CD4-positive, alpha-beta memory T cell (primary cell): ENCODE measurements at regions of chr6 and their contacts with region 1.

Region 1: GRCh38 chr6:31197559-31198305 is 27.2 kb upstream of the POU5F1 start:
- DNase-seq: peak; percentile 93 to 99 (median 96)
- H3K4me3 ChIP-seq: peak overlapping the region; percentile 62 to 99
- H3K4me3 Mint-ChIP-seq: peak overlapping the region; percentile 87 to 96 (median 94)
- H3K27ac ChIP-seq: peak overlapping the region; percentile 96
- H3K27ac Mint-ChIP-seq: peak overlapping the region; percentile 93 to 100 (median 99)
- H3K4me1 ChIP-seq: peaks cover 47% of the 10 kb centered on the region
- H3K4me1 Mint-ChIP-seq: peaks cover 41 to 72% (median 53%) of the 10 kb centered on the region in 4 donors
- H3K27me3 ChIP-seq: no peaks in the 10 kb centered on the region
- H3K27me3 Mint-ChIP-seq: peaks cover 0 to 3% of the 10 kb centered on the region in 2 donors

Region 2: GRCh38 chr6:30942338-30943060 is 255.2 kb before region 1 on chr6:
- CTCF ChIA-PET with region 1: no interaction called
- POLR2A ChIA-PET with region 1: no interaction called
- intact Hi-C with region 1: no loop called
- DNase-seq: no peak
- H3K4me3 ChIP-seq: no peak overlapping the region
- H3K4me3 Mint-ChIP-seq: no peak overlapping the region
- H3K27ac ChIP-seq: no peak overlapping the region
- H3K27ac Mint-ChIP-seq: no peak overlapping the region
- H3K4me1 ChIP-seq: no peaks in the 10 kb centered on the region
- H3K4me1 Mint-ChIP-seq: peaks cover 0 to 3% (median 0%) of the 10 kb centered on the region in 4 donors
- H3K27me3 ChIP-seq: peaks cover 20% of the 10 kb centered on the region
- H3K27me3 Mint-ChIP-seq: peaks cover 31 to 59% of the 10 kb centered on the region in 2 donors

Region 3: DNA sequence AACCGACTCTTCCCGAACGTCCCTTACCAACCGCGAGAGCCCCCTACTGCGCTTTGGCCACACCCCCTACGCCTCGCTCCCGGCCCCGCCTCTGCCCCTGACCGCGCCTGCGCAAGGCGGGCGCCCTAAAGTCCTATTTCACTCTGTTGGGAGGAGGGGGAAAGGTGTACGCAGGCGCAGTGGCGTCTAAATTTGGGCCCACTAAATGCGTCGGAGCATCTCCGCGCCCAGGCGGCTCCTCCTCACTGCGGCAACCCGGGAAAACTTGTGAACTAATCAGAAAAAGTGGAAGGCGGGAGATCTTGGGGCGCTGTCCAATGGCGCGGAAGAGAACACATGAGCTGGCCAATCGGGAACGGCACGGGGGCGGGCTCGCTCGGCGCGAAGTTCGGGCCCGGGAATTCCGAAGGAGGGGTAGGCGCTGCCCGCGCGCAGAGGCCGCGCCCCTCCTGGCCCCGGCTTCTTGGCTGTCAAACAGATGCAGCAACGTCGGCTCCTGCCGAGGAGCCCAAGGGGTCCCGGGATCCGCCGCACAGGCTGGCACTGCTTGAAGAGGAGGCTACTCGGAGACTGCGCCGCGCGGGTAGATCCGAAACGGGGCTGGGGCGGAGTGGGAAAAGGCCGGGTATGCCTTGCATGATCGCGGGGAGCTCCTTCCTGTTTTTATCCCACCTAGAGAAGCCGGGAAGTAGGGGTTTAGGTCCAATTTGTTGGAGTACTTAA is 39.4 kb before region 1 on chr6 and contains the start of gene TCF19:
- CTCF ChIA-PET with region 1: interaction called, 4 read pairs
- POLR2A ChIA-PET with region 1: interaction called, 34 read pairs
- intact Hi-C with region 1: loop called (anchors 1 kb)
- DNase-seq: peak; percentile 98 to 99 (median 98)
- H3K4me3 ChIP-seq: peak within 1 kb of the TSS; percentile 59 to 70
- H3K4me3 Mint-ChIP-seq: peak within 1 kb of the TSS; percentile 87 to 95 (median 90)
- H3K27ac ChIP-seq: peak within 1 kb of the TSS; percentile 69
- H3K27ac Mint-ChIP-seq: peak within 1 kb of the TSS; percentile 75 to 95 (median 93)
- H3K4me1 ChIP-seq: peaks cover 22% of the 10 kb centered on the region
- H3K4me1 Mint-ChIP-seq: peaks cover 14 to 34% (median 24%) of the 10 kb centered on the region in 4 donors
- H3K27me3 ChIP-seq: no peaks in the 10 kb centered on the region
- H3K27me3 Mint-ChIP-seq: no peaks in the 10 kb centered on the region
- total RNA-seq, gene TCF19: 9.0 to 9.9 TPM

Region 4: DNA sequence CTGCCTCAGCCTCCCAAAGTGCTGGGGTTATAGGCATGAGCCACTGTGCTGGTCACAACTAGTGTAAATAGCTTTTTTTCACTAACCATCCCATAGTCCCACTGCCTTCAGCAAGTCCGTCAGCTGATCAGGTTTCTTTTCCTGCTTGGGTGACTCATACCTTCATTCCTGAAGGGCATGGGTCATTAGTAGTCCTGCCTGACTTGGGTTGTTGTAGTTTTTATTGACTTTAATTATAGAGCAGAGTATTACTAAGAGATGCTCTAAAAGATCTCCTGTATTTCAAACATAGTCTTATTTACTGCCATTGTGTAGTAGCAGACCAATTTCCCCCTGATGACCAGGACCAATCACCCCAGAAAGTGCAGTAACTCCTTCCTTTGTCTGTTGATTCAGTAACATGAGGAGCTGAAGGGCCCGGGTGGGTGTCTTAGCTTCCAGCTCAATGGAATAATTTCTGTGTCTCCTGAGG is 48.4 kb after region 1 on chr6:
- CTCF ChIA-PET with region 1: interaction called, 4 read pairs
- POLR2A ChIA-PET with region 1: interaction called, 15 read pairs
- intact Hi-C with region 1: no loop called
- DNase-seq: no peak
- H3K4me3 ChIP-seq: no peak overlapping the region
- H3K4me3 Mint-ChIP-seq: no peak overlapping the region
- H3K27ac ChIP-seq: no peak overlapping the region
- H3K27ac Mint-ChIP-seq: no peak overlapping the region
- H3K4me1 ChIP-seq: peaks cover 7% of the 10 kb centered on the region
- H3K4me1 Mint-ChIP-seq: peaks cover 6 to 14% (median 11%) of the 10 kb centered on the region in 4 donors
- H3K27me3 ChIP-seq: no peaks in the 10 kb centered on the region
- H3K27me3 Mint-ChIP-seq: peaks cover 9 to 12% of the 10 kb centered on the region in 2 donors

Region 5: GRCh38 chr6:31271641-31272357 is 74.1 kb after region 1 on chr6 and contains the start of gene HLA-C:
- CTCF ChIA-PET with region 1: interaction called, 9 read pairs
- POLR2A ChIA-PET with region 1: interaction called, 90 read pairs
- intact Hi-C with region 1: loop called (anchors 1 kb)
- DNase-seq: peak; percentile 92 to 98 (median 93)
- H3K4me3 ChIP-seq: peak within 1 kb of the TSS; percentile 88 to 94
- H3K4me3 Mint-ChIP-seq: peak within 1 kb of the TSS; percentile 95 to 100 (median 98)
- H3K27ac ChIP-seq: peak within 1 kb of the TSS; percentile 100
- H3K27ac Mint-ChIP-seq: peak within 1 kb of the TSS; percentile 99 to 100 (median 100)
- H3K4me1 ChIP-seq: peaks cover 51% of the 10 kb centered on the region
- H3K4me1 Mint-ChIP-seq: peaks cover 45 to 77% (median 54%) of the 10 kb centered on the region in 4 donors
- H3K27me3 ChIP-seq: no peaks in the 10 kb centered on the region
- H3K27me3 Mint-ChIP-seq: peaks cover 0 to 2% of the 10 kb centered on the region in 2 donors
- total RNA-seq, gene HLA-C: 1,481 to 1,487 TPM

Region 6: DNA sequence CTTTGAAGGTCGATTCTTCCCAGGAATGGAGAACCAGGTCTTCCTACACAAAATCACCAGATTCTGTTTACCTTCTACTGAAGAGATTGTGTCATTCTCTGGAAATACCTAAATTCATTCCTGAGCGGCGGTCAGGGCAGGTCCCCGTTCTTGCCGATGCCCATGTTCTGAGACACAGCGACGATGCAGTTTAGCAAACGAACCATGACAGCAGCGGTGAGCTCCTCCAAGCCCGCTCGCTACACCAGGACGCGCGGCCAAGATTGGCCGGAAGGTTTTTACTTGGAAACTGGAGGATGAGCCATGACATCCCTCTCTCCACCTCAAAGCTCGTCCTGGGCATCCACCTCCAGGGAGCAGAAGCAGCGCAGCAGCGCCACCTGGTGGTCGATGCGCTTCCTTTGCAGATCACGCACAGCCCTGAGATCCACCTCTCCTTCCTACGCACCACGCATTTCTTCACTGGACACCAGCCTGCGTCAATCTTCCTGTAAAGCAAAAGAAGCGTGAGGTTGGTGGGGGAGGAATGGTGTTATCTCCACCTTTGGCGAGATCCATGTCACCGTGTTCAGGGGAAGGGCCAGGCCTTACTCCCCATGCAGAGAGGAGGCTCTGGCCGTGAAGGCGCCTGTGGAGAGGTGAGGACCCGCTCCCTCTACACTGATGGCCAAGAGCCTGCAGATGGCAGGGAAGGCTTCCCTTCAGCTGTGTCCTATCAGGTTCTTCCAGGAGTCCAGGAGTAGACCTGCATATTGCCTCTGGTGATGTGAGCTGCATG is 169.2 kb after region 1 on chr6:
- CTCF ChIA-PET with region 1: interaction called, 184 read pairs
- POLR2A ChIA-PET with region 1: interaction called, 517 read pairs
- intact Hi-C with region 1: loop called (anchors 1 kb)
- DNase-seq: peak; percentile 81 to 88 (median 85)
- H3K4me3 ChIP-seq: peak overlapping the region; percentile 30 to 67
- H3K4me3 Mint-ChIP-seq: peak overlapping the region; percentile 77 to 87 (median 86)
- H3K27ac ChIP-seq: peak overlapping the region; percentile 18
- H3K27ac Mint-ChIP-seq: peak overlapping the region; percentile 9 to 88 (median 77)
- H3K4me1 ChIP-seq: peaks cover 10% of the 10 kb centered on the region
- H3K4me1 Mint-ChIP-seq: peaks cover 10 to 16% (median 12%) of the 10 kb centered on the region in 4 donors
- H3K27me3 ChIP-seq: peaks cover 13% of the 10 kb centered on the region
- H3K27me3 Mint-ChIP-seq: peaks cover 9 to 12% of the 10 kb centered on the region in 2 donors